ENCODE measurements at regions of chr11 and their contacts with region 1.

Region 1: DNA sequence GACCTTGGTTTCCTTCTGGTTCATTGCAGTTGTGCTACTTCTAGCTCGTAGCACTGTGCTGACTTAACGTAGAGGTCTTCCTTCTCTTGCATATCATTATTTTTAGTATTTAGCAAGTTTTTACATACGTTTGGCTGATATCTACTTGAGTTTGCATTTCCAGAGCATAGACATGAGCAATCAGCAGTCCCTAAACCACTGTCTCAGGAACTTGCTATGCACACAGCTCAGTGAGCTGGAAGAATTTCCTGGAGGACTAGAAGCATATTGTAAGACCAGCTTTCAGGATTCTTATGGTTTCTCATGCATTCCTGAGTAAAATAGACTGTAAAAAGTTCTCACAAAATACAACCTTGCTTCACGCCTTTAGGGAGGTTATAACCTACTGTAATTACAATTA is 226.7 kb upstream of the PDGFD start:
- DNase-seq: no peak
- ATAC-seq: no peak
- H3K4me3 Mint-ChIP-seq: no peak overlapping the region
- H3K27ac Mint-ChIP-seq: no peak overlapping the region
- H3K4me1 Mint-ChIP-seq: no peaks in the 10 kb centered on the region
- H3K27me3 Mint-ChIP-seq: no peaks in the 10 kb centered on the region
- CTCF ChIP-seq: no peak

Region 2: GRCh38 chr11:104402812-104403521 is 12.3 kb after region 1 on chr11:
- CTCF ChIA-PET with region 1: no interaction called
- POLR2A ChIA-PET with region 1: no interaction called
- intact Hi-C with region 1: loop called (anchors 1 kb)
- DNase-seq: no peak
- ATAC-seq: peak; percentile 65
- H3K4me3 Mint-ChIP-seq: no peak overlapping the region
- H3K27ac Mint-ChIP-seq: no peak overlapping the region
- H3K4me1 Mint-ChIP-seq: peaks cover 7% of the 10 kb centered on the region
- H3K27me3 Mint-ChIP-seq: no peaks in the 10 kb centered on the region
- CTCF ChIP-seq: no peak